BJ (cell line): ENCODE measurements at regions of chr18 and their contacts with region 1.

Region 1: GRCh38 chr18:76476665-76477561 is 18.1 kb downstream of the ZNF516 start:
- DNase-seq: peak; percentile 86
- H3K4me3 ChIP-seq: peak overlapping the region; percentile 34
- H3K27me3 ChIP-seq: no peaks in the 10 kb centered on the region
- CTCF ChIP-seq: no peak

Region 2: GRCh38 chr18:76364282-76365259 is 112.3 kb before region 1 on chr18:
- CTCF ChIA-PET with region 1: no interaction called
- POLR2A ChIA-PET with region 1: no interaction called
- DNase-seq: no peak
- H3K4me3 ChIP-seq: no peak overlapping the region
- H3K27me3 ChIP-seq: no peaks in the 10 kb centered on the region
- CTCF ChIP-seq: no peak

Region 3: GRCh38 chr18:76488190-76488589 is 11.3 kb after region 1 on chr18:
- CTCF ChIA-PET with region 1: interaction called, 25 read pairs
- POLR2A ChIA-PET with region 1: interaction called, 3 read pairs
- DNase-seq: no peak
- H3K4me3 ChIP-seq: no peak overlapping the region
- H3K27me3 ChIP-seq: no peaks in the 10 kb centered on the region
- CTCF ChIP-seq: no peak

Region 4: DNA sequence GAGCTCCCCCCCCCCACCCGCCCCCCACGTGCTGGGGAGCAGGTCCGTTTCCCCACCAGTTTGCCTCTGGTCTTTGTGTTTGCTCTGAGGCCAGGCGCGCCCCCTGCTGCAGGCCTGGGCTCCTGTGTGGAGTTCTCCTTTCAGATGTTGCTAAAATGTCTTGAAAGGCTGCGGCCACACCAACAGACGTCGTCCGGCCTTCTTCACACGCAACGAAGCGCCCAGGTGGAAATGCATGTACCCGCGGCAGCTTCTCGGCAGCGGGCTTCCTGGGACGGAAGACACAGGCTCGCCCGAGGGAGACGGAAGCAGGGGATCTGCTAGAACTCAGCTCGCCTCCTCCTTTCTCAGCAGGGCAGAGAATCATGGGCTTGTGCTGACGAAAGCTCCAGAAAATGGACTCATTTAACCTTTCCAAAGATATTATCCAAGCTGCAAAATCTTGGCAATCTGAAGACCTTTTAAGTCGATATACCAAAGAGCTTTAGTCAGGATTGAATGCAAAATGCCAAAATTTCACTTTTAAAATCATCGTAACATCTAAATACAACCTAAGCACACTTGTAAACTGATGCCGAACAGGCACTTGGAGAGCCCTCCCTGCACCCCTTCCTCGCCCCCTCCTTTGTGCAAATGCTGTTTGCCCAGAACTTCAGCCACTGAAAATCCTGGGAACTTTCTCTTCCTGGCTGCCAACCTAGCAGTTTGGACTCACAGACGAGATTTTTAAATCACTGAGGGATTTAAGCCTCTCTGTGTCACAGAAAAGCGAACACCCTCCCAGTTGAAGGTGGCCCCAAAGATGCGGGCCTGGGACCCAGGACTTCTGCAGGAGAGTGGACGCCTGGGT is 143.6 kb after region 1 on chr18:
- CTCF ChIA-PET with region 1: no interaction called
- POLR2A ChIA-PET with region 1: no interaction called
- DNase-seq: no peak
- H3K4me3 ChIP-seq: peak overlapping the region; percentile 25; the same call in 1 of the 2 replicates
- H3K27me3 ChIP-seq: no peaks in the 10 kb centered on the region; the same call in 1 of the 2 replicates
- CTCF ChIP-seq: peak; percentile 85